ENCODE measurements at regions of chr11 and their contacts with region 1.

Region 1: DNA sequence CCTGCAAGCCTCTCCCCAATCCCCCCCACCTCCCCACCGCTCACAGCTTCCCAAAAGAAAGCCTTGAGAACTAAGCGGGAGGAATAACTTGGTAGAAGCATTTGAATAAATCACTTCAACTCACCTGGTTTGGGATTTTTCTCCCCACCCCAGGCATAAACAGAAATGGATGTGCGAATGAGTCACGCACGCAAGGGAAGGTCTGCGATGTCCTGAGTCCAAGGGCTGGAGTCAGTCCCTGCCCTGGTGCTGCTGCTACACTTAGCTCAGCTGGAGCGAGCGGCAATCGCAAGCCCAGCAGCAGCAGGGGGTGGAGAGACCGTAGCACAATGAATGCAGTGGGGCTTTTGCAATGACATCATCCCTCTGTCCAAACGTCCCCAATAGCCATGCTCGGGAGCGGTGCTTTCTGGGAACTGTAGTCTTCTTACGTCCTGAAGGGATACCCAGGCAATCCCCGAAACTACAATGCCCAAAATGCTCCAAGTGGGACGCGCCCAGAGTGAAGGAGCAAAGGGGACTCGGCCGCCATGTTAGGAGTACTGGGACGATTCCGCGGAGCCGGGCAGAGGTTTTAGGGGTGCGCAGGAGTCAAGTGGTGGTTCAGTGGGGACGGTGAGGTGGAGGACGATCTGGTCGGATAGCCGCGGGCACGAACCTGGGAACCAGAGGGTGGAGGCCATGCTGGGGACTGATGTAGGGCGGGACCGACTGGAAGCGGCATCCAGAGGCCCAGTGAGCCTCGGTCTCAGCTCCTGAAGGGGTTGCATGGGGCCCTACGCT is at the start of gene RAB30:
- DNase-seq: peak; percentile 95 to 97
- ATAC-seq: peak; percentile 93 to 97 (median 96)
- H3K4me3 ChIP-seq: peak within 1 kb of the TSS; percentile 68
- H3K27ac ChIP-seq: peak within 1 kb of the TSS; percentile 90
- H3K4me1 ChIP-seq: peaks cover 43% of the 10 kb centered on the region
- H3K27me3 ChIP-seq: no peaks in the 10 kb centered on the region
- CTCF ChIP-seq: no peak
- total RNA-seq, gene RAB30: 15.2 to 89.7 (median 37.6) TPM

Region 2: DNA sequence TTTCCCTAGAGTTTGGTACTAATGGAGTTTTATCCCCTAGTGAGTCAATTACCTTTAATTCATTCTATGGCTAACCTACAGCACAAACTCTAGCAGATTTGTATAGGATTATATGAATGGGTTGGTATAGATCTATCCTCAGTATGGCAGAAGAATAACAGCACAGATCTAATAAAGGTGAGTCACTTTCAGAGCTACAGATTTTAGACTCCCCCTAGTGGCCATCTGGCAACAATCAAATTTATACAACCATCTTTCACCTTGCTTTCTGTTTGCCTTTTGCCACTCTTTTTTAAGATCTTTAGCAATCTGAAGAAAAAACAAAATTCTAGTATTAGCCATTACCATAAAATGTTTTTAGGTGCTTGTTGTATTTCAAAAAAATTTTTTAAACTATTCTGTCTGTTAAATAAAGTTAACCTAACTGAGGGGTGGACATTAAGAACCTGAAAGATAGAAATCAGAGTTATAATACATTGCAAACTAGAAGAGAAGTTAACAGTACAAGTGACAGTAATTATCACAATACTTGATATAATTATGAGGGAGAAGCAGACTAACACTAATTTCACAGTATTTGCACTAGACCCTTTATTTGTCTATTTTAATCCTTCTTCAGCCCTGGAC is 144.4 kb before region 1 on chr11:
- intact Hi-C with region 1: loop called in 1 of 2 experiments (anchors 5 kb)
- DNase-seq: no peak
- ATAC-seq: peak in 2 of 4 donors; percentile 72 to 85
- H3K4me3 ChIP-seq: no peak overlapping the region
- H3K27ac ChIP-seq: no peak overlapping the region
- H3K4me1 ChIP-seq: no peaks in the 10 kb centered on the region
- H3K27me3 ChIP-seq: no peaks in the 10 kb centered on the region
- CTCF ChIP-seq: peak; percentile 83

Region 3: DNA sequence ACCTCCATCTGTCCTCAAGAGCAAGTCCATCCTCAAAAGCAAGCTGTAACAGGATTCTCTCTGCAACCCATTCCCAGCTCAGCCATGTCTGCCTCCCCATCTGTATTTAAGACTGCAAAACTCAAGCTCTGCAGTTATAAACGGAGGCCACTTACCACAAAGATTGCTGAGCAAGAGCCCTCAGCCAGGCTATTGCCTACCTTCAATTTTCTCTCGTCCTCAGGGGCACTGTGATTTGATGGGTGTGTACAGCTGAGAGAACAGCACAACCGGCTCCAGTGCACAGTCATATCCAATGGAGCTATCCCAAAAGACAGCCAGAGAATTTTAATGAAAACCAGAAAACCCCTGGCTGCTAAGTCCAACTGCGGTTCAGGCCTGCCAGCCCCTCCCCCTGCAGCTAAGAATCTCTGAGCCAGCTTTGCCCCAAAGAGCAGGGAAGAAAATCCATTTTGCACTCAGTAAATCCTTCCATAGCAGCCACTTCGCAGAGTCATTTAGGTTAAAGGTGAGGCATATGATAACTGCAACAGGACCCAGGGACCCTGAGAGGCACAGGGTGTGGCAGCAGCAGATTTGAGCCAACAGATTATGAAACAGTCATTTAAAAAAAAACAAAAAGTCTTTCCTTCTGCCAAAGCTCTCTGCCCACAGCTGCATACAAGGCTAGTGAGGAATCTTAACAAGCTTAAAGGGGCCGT is 37.6 kb before region 1 on chr11:
- intact Hi-C with region 1: loop called (anchors 1 to 2 kb)
- DNase-seq: peak; percentile 41 to 78
- ATAC-seq: peak; percentile 71 to 82 (median 76)
- H3K4me3 ChIP-seq: peak overlapping the region; percentile 59
- H3K27ac ChIP-seq: peak overlapping the region; percentile 77
- H3K4me1 ChIP-seq: peaks cover 43% of the 10 kb centered on the region
- H3K27me3 ChIP-seq: no peaks in the 10 kb centered on the region
- CTCF ChIP-seq: no peak

Region 4: DNA sequence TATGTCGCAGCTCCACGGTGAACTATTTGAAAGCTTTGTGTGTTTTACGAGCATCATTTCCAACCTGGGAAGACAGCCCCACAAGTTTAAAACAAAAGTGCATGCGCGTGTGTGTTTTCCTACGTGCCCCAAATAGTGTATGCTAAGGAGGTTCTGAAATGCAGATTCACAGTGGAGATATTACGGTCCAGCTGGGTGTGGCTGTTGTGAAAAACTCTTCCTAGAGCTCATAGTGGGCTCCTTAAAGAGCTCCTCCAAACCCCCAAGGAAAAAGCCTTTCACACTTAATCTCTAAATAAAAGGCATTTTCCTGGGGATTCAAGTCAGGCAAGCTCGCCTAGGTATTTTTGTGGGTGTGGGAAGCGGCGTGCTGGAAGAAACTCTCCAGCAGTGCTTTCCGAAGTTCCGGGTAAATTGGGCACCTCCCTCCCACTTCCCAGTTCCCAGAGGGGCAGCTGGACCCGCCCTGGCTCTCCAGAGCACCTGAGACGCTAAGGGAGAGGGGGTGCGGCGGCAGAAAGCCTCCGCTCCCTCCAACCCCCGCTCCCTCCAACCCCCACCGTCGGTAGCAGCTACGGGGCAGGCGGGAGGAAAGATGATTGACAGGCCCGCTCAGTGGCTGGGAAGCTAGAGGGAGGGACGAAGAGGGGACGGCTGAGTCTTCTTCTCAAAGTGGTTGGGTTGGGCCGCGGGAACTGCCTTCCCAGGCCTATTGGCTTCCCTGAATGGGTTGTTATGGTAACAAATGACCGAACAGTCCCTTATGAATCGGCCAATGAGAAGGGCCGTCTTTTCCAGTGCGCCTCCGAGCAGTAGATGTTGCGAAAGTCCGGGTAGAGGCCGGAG is 84.6 kb after region 1 on chr11:
- intact Hi-C with region 1: loop called (anchors 1 to 2 kb)
- DNase-seq: peak; percentile 98 to 99
- ATAC-seq: peak; percentile 89 to 96 (median 92)
- H3K4me3 ChIP-seq: peak overlapping the region; percentile 94
- H3K27ac ChIP-seq: peak overlapping the region; percentile 95
- H3K4me1 ChIP-seq: peaks cover 17% of the 10 kb centered on the region
- H3K27me3 ChIP-seq: no peaks in the 10 kb centered on the region
- CTCF ChIP-seq: no peak

Region 5: DNA sequence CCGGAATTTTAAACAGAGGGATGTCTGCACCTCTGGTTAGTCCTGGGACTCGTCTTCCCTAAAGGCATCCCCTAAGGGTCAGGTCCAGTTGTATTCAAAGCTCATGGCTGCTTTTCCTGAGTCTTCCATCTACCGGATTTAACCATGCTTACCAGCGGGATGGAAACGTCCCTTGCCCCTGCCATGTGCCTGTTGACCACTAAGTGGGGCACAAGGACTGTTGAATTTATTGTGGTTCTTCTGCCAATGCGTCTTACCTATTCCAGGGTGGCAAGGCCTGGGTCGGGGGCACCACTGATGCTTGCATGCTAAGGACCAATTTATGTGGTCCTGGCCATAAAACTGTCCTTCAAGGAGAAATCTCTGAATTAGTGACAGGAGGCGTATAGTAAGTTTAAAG is 147.3 kb after region 1 on chr11:
- intact Hi-C with region 1: no loop called
- DNase-seq: no peak
- ATAC-seq: no peak
- H3K4me3 ChIP-seq: no peak overlapping the region
- H3K27ac ChIP-seq: no peak overlapping the region
- H3K4me1 ChIP-seq: no peaks in the 10 kb centered on the region
- H3K27me3 ChIP-seq: no peaks in the 10 kb centered on the region
- CTCF ChIP-seq: peak; percentile 9